Activated T-helper 1 cell treated with anti-CD3 and anti-CD28 coated beads, Interleukin-12 subunit alpha, Interleukin-12 subunit beta, Interleukin-2, Interleukin-4 antibody, amounts not matched to agents 30 ng/mL and 10 ng/mL and 1 ng/mL, durations not matched to agents 14 hours and 24 hours and 36 hours (primary cell): ENCODE measurements at regions of chr14 and their contacts with region 1.

Region 1: GRCh38 chr14:74084277-74085046 is at the starts of genes ALDH6A1 and LIN52:
- DNase-seq: peak; percentile 100
- H3K4me3 Mint-ChIP-seq: peak within 1 kb of the TSS; percentile 94
- H3K27ac Mint-ChIP-seq: peak within 1 kb of the TSS; percentile 94
- H3K4me1 Mint-ChIP-seq: peaks cover 45% of the 10 kb centered on the region
- H3K27me3 Mint-ChIP-seq: peaks cover 4% of the 10 kb centered on the region
- total RNA-seq, gene ALDH6A1: 10.8 and 11.0 TPM in 2 replicates
- total RNA-seq, gene LIN52: 15.9 and 17.2 TPM in 2 replicates

Region 2: GRCh38 chr14:73644531-73645247 is 439.8 kb before region 1 on chr14 and contains the start of gene DNAL1:
- intact Hi-C with region 1: loop called (anchors 5 kb)
- DNase-seq: peak; percentile 92
- H3K4me3 Mint-ChIP-seq: peak within 1 kb of the TSS; percentile 86
- H3K27ac Mint-ChIP-seq: peak within 1 kb of the TSS; percentile 71
- H3K4me1 Mint-ChIP-seq: peaks cover 15% of the 10 kb centered on the region
- H3K27me3 Mint-ChIP-seq: no peaks in the 10 kb centered on the region
- total RNA-seq, gene DNAL1: 5.3 and 8.5 TPM in 2 replicates

Region 3: DNA sequence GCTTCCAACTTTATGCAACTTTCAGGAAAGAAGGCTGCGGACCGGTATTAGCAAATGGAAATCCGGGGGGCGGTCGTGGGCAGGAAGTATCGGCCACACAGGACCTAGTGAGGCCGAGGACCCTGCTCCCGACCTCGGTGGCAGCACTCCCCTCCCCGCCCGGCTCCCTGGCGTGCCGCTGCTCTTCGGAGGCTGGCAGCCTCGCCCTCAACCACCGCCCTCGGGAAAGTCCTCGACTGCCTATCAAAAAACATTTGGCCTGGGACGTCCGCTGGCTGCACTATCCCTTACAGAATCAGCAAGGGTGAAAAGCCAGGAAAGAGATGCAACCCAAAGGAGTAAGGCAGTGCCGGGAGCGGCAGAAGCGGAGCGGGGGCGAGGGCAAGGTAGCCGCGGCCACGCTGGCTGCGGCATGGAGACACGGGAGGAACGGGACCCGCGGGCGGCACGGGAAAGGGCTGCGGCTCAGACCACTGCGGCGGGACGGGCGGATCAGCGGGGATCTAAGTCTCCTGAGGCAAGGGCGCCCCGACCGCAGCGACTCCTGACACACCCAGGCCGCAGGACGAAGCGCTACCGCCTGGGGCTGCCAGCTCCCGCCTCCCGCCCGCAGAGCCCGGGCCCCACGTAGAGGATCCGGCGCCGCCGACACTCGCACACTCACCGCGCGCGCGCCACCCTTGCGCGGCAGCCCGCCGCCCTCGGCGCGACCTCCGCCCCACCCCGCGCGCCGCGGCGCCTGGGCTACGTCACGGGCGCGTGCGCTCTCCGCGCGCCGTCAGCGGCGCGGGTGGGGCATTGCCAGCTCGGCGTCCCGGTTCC is 65.7 kb before region 1 on chr14 and contains the starts of genes BBOF1 and ENTPD5:
- intact Hi-C with region 1: loop called (anchors 1 kb)
- DNase-seq: peak; percentile 85
- H3K4me3 Mint-ChIP-seq: peak within 1 kb of the TSS; percentile 95
- H3K27ac Mint-ChIP-seq: peak within 1 kb of the TSS; percentile 97
- H3K4me1 Mint-ChIP-seq: peaks cover 17% of the 10 kb centered on the region
- H3K27me3 Mint-ChIP-seq: peaks cover 3% of the 10 kb centered on the region
- total RNA-seq, gene BBOF1: 0.51 and 0.88 TPM in 2 replicates
- total RNA-seq, gene ENTPD5: 10.7 and 12.2 TPM in 2 replicates

Region 4: GRCh38 chr14:74065746-74066575 is 18.5 kb before region 1 on chr14:
- intact Hi-C with region 1: no loop called
- DNase-seq: no peak
- H3K4me3 Mint-ChIP-seq: no peak overlapping the region
- H3K27ac Mint-ChIP-seq: no peak overlapping the region
- H3K4me1 Mint-ChIP-seq: no peaks in the 10 kb centered on the region
- H3K27me3 Mint-ChIP-seq: no peaks in the 10 kb centered on the region

Region 5: GRCh38 chr14:74217672-74218448 is 133.4 kb after region 1 on chr14:
- intact Hi-C with region 1: no loop called
- DNase-seq: peak; percentile 63
- H3K4me3 Mint-ChIP-seq: no peak overlapping the region
- H3K27ac Mint-ChIP-seq: no peak overlapping the region
- H3K4me1 Mint-ChIP-seq: no peaks in the 10 kb centered on the region
- H3K27me3 Mint-ChIP-seq: peaks cover 28% of the 10 kb centered on the region

Region 6: DNA sequence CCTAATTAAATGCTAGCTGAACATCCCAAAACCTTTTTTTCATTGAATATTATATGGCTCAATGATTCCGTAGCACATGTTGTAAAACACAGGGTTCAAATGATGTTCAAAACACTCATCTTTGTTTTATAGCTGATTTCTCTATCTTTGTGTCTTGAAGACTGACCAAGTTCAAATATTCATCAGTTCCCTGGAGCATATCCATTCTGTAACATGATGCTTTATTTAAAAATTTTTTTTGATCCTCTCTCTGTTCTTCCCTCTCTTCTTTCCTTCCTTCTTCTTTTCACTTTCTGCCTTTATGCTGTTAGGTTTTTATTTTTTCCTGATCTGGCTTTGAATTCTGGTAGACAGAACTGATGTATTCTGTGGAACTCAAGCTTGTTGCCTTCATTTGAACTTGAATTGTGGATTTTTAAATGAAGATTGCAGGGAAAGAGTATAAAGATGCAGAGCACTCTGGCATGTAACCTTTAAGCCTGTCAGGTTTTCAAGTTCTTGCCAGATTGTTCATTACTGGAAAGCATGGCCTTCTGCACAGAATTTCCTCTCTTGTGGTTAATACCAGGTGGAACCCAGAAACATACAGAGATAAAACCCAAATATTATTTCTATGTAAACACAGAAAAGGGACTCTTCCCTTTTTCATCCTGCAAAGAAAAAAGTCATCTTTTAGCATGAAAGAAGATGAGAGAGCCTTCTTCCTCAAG is 751.9 kb after region 1 on chr14:
- intact Hi-C with region 1: loop called (anchors 1 kb)
- DNase-seq: no peak
- H3K4me3 Mint-ChIP-seq: peak overlapping the region; percentile 50
- H3K27ac Mint-ChIP-seq: peak overlapping the region; percentile 92
- H3K4me1 Mint-ChIP-seq: peaks cover 68% of the 10 kb centered on the region
- H3K27me3 Mint-ChIP-seq: no peaks in the 10 kb centered on the region